ENCODE measurements at regions of chr3 and their contacts with region 1.

Region 1: DNA sequence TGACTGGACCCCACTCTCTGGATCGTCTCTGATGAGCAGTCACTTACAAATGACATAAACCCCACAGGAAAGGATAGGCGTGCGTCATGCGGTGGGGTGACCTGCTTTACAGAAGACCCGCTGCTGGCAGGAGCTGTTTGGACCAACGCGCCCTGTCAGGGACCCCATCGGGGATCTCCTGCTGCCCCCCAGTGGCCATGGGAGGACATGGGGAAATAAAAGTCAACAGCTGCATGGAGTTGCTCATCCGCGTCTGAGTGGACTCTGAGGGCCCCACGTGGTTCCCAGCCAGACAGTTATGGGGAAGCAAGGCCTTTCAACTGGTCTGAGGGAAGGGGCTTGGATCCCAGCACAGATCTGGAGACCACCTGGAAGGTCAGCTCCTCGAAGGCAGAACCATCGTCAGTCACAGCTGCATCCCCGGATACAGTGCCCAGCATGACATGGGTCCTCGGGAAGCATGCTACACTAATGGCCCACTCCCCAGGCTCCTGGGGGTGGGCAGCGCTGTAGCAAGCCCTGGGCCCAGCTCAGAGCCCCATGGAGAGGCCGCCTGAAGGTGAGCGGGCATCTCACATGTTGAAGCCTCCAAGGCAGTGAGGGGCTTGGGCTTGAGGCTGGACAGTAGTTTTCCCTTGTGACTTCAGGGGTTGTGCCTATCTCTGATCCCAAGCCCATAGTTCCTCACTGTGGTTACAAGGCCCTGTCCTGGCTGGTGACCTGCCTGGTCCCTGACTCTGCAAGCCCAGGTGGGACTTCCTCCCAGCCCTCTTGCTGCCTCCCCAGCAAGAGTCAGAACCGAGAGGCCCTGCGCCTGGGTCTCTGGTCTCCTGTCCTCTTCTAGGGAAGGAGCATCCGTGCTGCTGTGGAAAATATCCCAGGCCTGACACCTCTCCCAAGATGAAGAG is 32.3 kb downstream of the PTH1R start:
- DNase-seq: peak; percentile 81 to 82 (median 81)
- ATAC-seq: peak; percentile 78 to 83 (median 80)
- H3K4me3 ChIP-seq: no peak overlapping the region
- H3K27ac ChIP-seq: no peak overlapping the region
- H3K4me1 ChIP-seq: peaks cover 0 to 29% (median 11%) of the 10 kb centered on the region in 4 donors
- H3K27me3 ChIP-seq: no peaks in the 10 kb centered on the region
- CTCF ChIP-seq: peak; percentile 78 to 88 (median 84)
- POLR2A ChIP-seq: no peak

Region 2: GRCh38 chr3:46851364-46852333 is 58.1 kb before region 1 on chr3:
- intact Hi-C with region 1: loop called in 1 of 2 experiments (anchors 10 kb)
- DNase-seq: no peak
- ATAC-seq: no peak
- H3K4me3 ChIP-seq: no peak overlapping the region
- H3K27ac ChIP-seq: no peak overlapping the region
- H3K4me1 ChIP-seq: no peaks in the 10 kb centered on the region
- H3K27me3 ChIP-seq: no peaks in the 10 kb centered on the region
- CTCF ChIP-seq: no peak
- POLR2A ChIP-seq: no peak

Region 3: GRCh38 chr3:47210863-47211405 is 301.1 kb after region 1 on chr3:
- intact Hi-C with region 1: no loop called
- DNase-seq: peak in 1 of 3 donors; percentile 1
- ATAC-seq: no peak
- H3K4me3 ChIP-seq: no peak overlapping the region
- H3K27ac ChIP-seq: no peak overlapping the region
- H3K4me1 ChIP-seq: no peaks in the 10 kb centered on the region
- H3K27me3 ChIP-seq: no peaks in the 10 kb centered on the region
- CTCF ChIP-seq: no peak
- POLR2A ChIP-seq: no peak

Measured in right lobe of liver (tissue), 6 donors.